PC-3 (cell line): ENCODE measurements at regions of chr13 and their contacts with region 1.

Region 1: GRCh38 chr13:90673746-90674145 is 673.7 kb upstream of the MIR17HG start:
- DNase-seq: no peak
- ATAC-seq: no peak
- H3K4me3 ChIP-seq: no peak overlapping the region
- H3K27ac ChIP-seq: no peak overlapping the region
- H3K4me1 ChIP-seq: no peaks in the 10 kb centered on the region
- H3K27me3 ChIP-seq: no peaks in the 10 kb centered on the region
- CTCF ChIP-seq: no peak

Region 2: GRCh38 chr13:90485436-90485835 is 188.3 kb before region 1 on chr13:
- CTCF ChIA-PET with region 1: no interaction called
- POLR2A ChIA-PET with region 1: no interaction called
- intact Hi-C with region 1: loop called (anchors 10 kb)
- DNase-seq: peak; percentile 80
- ATAC-seq: peak; percentile 99
- H3K4me3 ChIP-seq: no peak overlapping the region
- H3K27ac ChIP-seq: peak overlapping the region; percentile 18; the same call in 1 of the 2 replicates
- H3K4me1 ChIP-seq: peaks cover 14% of the 10 kb centered on the region
- H3K27me3 ChIP-seq: no peaks in the 10 kb centered on the region
- CTCF ChIP-seq: no peak

Region 3: DNA sequence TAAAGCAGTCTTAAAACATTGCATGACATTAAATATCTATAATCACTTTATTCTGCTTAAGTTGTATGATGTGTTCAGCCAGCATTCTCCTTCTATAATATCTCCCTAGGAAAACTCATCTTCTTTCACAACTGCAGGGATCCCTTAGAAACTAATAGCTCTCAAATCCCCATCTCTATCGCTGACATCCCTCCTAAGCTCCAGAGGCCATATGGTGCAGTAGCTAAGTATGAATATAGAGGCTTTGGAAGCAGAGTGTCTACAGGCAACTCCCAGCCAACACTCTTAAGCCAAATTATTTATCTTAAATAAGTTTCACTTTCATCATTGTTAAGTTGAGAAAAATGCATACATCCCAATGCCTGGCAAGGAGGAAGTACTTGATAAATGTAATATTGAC is 324.2 kb after region 1 on chr13:
- CTCF ChIA-PET with region 1: no interaction called
- POLR2A ChIA-PET with region 1: no interaction called
- intact Hi-C with region 1: no loop called
- DNase-seq: no peak
- ATAC-seq: no peak
- H3K4me3 ChIP-seq: no peak overlapping the region
- H3K27ac ChIP-seq: no peak overlapping the region
- H3K4me1 ChIP-seq: no peaks in the 10 kb centered on the region
- H3K27me3 ChIP-seq: no peaks in the 10 kb centered on the region; the same call in 1 of the 2 replicates
- CTCF ChIP-seq: no peak